ENCODE measurements at regions of chr10 and their contacts with region 1.

Region 1: GRCh38 chr10:121734589-121735045 is 136.4 kb upstream of the FGFR2 start:
- DNase-seq: peak in 5 of 10 donors; percentile 14 to 85 (median 28)

Region 2: DNA sequence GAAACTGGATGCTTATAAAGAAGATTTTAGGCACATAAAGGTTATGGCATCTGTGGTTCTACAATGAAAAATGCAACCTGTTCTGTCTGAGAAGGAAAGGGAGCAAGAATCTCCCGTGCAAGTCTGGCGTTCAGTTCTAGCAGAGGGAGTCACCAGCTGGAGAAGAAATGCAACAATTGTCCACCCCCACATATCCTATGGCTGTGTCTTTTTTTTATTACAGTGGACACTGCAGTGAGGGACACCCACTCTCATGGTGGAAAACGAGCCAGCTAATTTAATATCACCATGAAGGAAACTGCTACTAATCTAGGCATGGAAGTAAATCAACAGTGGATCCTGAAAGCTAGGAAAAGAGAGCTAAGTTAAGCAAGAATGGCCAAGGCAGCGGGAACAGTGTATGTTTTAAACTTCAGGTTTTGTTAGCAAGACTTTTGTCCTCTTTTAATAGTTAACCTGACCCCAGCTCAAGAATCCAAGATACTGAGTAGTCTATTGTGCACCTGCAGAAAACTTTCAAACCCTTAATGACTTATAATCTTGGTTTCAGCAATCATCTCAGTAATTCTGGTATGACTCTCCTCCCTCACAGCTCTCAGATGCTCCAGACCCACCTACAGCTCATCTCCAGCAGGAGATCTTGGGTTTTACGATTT is 285.7 kb before region 1 on chr10:
- intact Hi-C with region 1: no loop called
- DNase-seq: peak in 1 of 10 donors; percentile 1

Region 3: DNA sequence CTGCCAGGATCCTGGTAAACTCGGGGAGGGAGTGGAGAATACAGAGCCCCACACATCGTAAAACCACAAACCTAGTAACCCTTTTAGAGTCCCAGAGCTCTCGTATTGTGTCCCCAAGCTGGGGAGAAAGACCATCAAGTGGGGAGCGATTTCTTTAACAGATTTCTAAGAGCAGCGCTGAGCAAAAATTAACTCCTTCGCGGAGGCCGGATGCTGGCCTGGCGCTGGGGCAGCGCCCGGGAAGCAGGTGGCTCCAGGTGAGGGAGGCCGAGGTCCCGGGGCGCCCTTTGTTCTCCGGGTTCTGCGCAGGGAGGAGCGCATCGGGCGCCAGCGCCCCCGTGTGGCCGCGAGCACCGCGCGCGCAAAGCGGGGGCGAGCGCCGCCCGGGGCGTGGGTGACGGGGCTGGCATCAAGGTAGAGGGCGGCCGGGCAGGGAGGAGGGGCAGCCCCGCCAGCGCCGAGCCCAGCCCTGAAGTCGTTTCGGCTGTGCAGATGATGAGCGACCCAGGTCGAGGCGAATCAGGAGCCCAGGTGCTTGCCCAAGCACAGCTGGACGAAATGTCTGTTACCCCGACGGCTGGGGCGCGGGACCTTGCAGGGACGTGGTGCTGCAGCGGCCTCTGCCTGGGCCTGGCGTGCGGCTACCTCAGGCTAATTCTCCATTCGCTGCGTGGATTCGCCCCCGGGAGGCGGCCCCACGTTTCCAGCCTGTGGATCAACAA is 126.0 kb before region 1 on chr10:
- intact Hi-C with region 1: loop called (anchors 5 kb)
- DNase-seq: peak in 8 of 10 donors; percentile 17 to 93 (median 66)

Region 4: GRCh38 chr10:121764233-121764942 is 29.8 kb after region 1 on chr10:
- intact Hi-C with region 1: no loop called
- DNase-seq: no peak

Region 5: DNA sequence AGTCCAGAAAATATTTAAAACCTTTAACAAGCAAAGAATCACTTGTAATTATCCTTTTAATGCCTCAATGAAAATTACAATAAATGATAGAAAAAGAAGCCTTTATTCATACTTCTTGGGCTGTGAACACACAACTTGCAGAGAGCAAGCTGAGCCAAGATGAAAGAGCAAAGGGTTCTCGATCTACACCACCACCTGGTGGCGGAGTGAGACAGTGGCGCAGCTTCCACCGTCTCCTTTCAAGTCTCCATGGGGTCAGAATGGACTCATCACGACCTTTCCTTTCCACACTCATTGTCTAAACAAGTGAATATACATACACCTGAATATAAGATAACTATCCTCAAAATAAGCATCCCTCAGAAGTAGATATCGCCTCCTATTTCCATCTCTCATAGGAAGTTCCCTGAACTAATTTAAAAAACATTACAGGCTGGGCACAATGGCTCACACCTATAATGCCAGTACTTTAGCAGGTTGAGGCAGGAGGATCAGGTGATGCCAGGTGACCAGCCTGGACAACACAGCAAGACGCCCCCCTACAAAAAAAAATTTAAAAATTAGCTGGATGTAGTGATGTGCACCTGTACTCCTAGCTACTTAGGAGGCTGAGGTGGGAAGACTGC is 152.5 kb after region 1 on chr10:
- intact Hi-C with region 1: loop called (anchors 5 kb)
- DNase-seq: peak; percentile 25 to 95 (median 71)

Region 6: GRCh38 chr10:122567056-122567660 is 832.5 kb after region 1 on chr10:
- intact Hi-C with region 1: no loop called
- DNase-seq: peak in 3 of 10 donors; percentile 26 to 83 (median 37)

Measured in posterior cingulate gyrus (tissue), 11 donors.